ENCODE measurements at regions of chr9 and their contacts with region 1.

Region 1: DNA sequence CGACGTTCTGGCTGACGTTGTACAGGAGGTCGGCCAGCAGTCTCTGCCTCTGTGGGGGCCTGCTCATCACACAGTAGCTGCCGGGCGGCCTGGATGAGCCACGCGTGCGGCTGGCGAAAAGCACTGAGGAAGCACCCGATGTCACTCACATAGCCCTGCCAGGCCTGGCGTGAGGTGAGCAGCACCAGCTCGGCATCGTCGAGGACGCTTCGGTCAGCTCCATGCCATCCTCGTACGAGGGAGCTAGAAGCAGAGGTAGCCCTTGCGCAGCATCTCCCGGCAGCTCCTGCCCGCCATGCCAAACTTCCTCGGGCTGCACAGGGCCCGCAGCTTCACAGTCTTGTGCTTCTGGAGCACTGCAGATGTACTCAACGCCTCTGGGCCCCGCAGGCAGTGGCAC is 6.2 kb downstream of the NDUFB6 start:
- DNase-seq: no peak
- H3K4me3 ChIP-seq: no peak overlapping the region
- H3K27ac ChIP-seq: no peak overlapping the region
- H3K4me1 ChIP-seq: peaks cover 9% of the 10 kb centered on the region
- H3K27me3 ChIP-seq: no peaks in the 10 kb centered on the region
- CTCF ChIP-seq: no peak

Region 2: GRCh38 chr9:32502464-32502863 is 64.3 kb before region 1 on chr9:
- CTCF ChIA-PET with region 1: no interaction called
- POLR2A ChIA-PET with region 1: no interaction called
- intact Hi-C with region 1: loop called (anchors 10 kb)
- DNase-seq: peak; percentile 27
- H3K4me3 ChIP-seq: no peak overlapping the region
- H3K27ac ChIP-seq: no peak overlapping the region
- H3K4me1 ChIP-seq: no peaks in the 10 kb centered on the region
- H3K27me3 ChIP-seq: no peaks in the 10 kb centered on the region
- CTCF ChIP-seq: no peak

Region 3: DNA sequence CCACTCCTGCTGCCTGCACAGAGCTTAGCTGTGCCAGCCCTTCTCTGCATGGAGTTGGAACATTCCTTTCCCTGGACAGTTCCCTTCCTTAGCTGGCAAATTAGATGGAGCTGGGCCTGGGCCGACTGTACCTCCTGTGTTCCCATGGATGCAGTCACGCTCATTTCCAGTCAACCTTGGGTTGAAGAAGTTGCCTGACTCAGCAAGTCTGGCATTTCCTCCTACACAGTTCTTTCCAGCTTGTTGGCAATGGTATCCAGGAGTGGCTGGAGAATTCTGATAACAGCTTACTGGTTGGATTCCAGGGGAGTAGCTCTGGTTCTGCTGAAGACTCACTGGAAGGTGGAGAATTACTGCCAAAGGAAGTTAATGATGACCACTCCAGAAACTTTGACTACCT is 77.9 kb after region 1 on chr9:
- CTCF ChIA-PET with region 1: no interaction called
- POLR2A ChIA-PET with region 1: no interaction called
- intact Hi-C with region 1: no loop called
- DNase-seq: peak; percentile 24
- H3K4me3 ChIP-seq: no peak overlapping the region
- H3K27ac ChIP-seq: no peak overlapping the region
- H3K4me1 ChIP-seq: no peaks in the 10 kb centered on the region
- H3K27me3 ChIP-seq: peaks cover 3% of the 10 kb centered on the region
- CTCF ChIP-seq: no peak

Measured in A673 (cell line).